IMR-90 (cell line): ENCODE measurements at regions of chr12 and their contacts with region 1.

Region 1: GRCh38 chr12:55847603-55848291 is 5.0 kb upstream of the MMP19 start:
- DNase-seq: peak; percentile 100
- ATAC-seq: peak; percentile 97
- H3K4me3 ChIP-seq: no peak overlapping the region
- H3K27ac ChIP-seq: peak overlapping the region; percentile 91
- H3K4me1 ChIP-seq: peaks cover 13% of the 10 kb centered on the region
- H3K27me3 ChIP-seq: no peaks in the 10 kb centered on the region
- CTCF ChIP-seq: no peak
- POLR2A ChIP-seq: peak; percentile 94
- RAD21 ChIP-seq: no peak

Region 2: DNA sequence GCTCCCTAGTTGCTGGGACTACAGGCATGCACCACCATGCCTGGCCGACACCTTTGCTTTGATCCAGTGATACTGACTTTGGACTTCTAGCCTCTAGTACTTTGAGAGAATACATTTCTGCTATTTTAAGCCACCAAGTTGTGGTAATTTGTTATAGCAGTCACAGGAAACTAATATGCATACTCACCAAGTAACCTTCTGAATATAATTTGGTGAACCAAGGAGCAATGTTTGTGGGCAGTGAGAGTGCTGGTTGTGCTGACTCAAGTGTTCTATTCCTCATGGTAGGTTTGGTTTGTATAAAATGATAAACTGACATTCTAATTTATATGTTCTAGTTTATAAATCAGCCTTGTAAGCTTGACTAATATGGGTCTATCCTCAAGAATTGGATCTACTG is 37.4 kb after region 1 on chr12:
- CTCF ChIA-PET with region 1: no interaction called
- POLR2A ChIA-PET with region 1: no interaction called
- dilution Hi-C with region 1: no loop called
- in situ Hi-C with region 1: no loop called
- intact Hi-C with region 1: loop called (anchors 5 kb)
- DNase-seq: no peak
- ATAC-seq: no peak
- H3K4me3 ChIP-seq: no peak overlapping the region
- H3K27ac ChIP-seq: no peak overlapping the region
- H3K4me1 ChIP-seq: no peaks in the 10 kb centered on the region; the same call in 1 of the 2 replicates
- H3K27me3 ChIP-seq: no peaks in the 10 kb centered on the region
- CTCF ChIP-seq: no peak
- POLR2A ChIP-seq: no peak
- RAD21 ChIP-seq: no peak

Region 3: DNA sequence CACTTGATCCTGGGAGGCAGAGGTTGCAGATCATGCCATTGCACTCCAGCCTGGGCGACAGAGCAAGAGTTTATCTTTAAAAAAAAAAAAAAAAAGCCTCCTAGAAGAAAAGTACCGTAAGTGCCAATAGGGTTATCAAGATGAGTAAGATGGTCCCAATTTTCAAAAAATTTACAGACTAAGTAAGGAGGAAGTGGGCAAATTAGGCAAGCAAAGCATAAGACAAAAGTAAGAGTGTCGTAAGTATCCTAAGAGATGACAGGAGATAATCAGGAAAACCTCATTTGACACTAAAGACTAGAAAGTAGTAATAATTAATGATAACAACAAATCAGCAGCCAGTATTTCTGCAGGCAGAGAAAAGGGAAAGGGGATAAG is 67.7 kb after region 1 on chr12:
- CTCF ChIA-PET with region 1: no interaction called
- POLR2A ChIA-PET with region 1: no interaction called
- dilution Hi-C with region 1: no loop called
- in situ Hi-C with region 1: no loop called
- intact Hi-C with region 1: loop called (anchors 5 kb)
- DNase-seq: no peak
- ATAC-seq: no peak
- H3K4me3 ChIP-seq: no peak overlapping the region
- H3K27ac ChIP-seq: no peak overlapping the region
- H3K4me1 ChIP-seq: no peaks in the 10 kb centered on the region
- H3K27me3 ChIP-seq: no peaks in the 10 kb centered on the region
- CTCF ChIP-seq: no peak
- POLR2A ChIP-seq: no peak
- RAD21 ChIP-seq: no peak

Region 4: DNA sequence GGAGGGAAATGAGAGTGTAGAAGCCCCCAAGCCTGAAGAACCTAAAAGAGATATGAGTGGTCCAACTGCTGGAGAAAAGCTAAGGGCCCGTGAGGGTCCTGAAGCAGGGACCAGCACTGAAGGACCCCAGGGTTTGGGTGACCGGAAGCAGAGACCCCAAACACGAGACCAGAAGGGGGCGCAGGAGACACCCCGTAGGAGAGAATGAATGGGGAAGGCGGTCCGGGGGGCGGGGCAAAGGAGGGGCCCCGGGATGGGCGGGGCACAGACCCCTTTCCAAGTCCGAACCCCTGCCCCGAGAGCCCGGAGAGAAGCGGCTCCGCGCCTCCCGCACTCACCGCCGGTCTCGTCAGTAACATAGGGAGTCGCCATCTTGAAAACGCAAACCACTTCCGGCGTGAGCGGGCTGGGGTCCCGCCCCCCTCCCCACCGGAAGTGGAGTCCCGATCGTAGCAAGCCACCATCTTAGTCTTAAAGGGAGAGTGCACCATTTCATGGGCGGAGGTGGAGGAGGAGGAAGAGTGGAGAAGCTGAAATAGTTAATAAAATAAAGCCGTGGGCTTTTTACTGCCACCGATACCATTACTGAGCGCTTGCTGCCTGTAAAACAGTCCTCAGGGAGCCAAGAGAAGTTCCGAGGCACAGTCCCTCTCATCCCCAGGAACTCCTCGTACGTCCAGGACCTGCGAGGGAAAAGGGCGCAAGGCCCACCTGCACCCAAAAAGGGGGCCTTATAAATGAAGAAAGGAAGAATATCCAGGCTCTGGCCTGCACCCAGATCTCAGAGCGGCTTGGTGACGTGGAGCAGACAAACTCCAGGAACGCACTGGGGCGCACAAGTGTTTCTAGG is 79.2 kb after region 1 on chr12:
- CTCF ChIA-PET with region 1: interaction called, 3 read pairs
- POLR2A ChIA-PET with region 1: no interaction called
- dilution Hi-C with region 1: no loop called
- in situ Hi-C with region 1: no loop called
- intact Hi-C with region 1: loop called (anchors 1 kb)
- DNase-seq: peak; percentile 91
- ATAC-seq: peak; percentile 70
- H3K4me3 ChIP-seq: peak overlapping the region; percentile 83
- H3K27ac ChIP-seq: peak overlapping the region; percentile 94
- H3K4me1 ChIP-seq: peaks cover 13% of the 10 kb centered on the region
- H3K27me3 ChIP-seq: no peaks in the 10 kb centered on the region
- CTCF ChIP-seq: peak; percentile 64
- POLR2A ChIP-seq: peak; percentile 84
- RAD21 ChIP-seq: no peak; the same call in 1 of the 2 replicates